ENCODE measurements at regions of chr11 and their contacts with region 1.

Region 1: GRCh38 chr11:117843666-117844484 is 19.3 kb upstream of the FXYD2 start:
- DNase-seq: peak; percentile 90
- H3K4me3 Mint-ChIP-seq: no peak overlapping the region
- H3K27ac Mint-ChIP-seq: no peak overlapping the region
- H3K4me1 Mint-ChIP-seq: no peaks in the 10 kb centered on the region
- H3K27me3 Mint-ChIP-seq: no peaks in the 10 kb centered on the region

Region 2: GRCh38 chr11:117877120-117877784 is 33.4 kb after region 1 on chr11:
- CTCF ChIA-PET with region 1: no interaction called
- POLR2A ChIA-PET with region 1: no interaction called
- intact Hi-C with region 1: no loop called
- DNase-seq: no peak
- H3K4me3 Mint-ChIP-seq: peak overlapping the region; percentile 42
- H3K27ac Mint-ChIP-seq: no peak overlapping the region
- H3K4me1 Mint-ChIP-seq: peaks cover 21% of the 10 kb centered on the region
- H3K27me3 Mint-ChIP-seq: peaks cover 46% of the 10 kb centered on the region

Region 3: GRCh38 chr11:117907251-117907981 is 63.5 kb after region 1 on chr11:
- CTCF ChIA-PET with region 1: interaction called, 10 read pairs
- POLR2A ChIA-PET with region 1: no interaction called
- intact Hi-C with region 1: loop called (anchors 1 kb)
- DNase-seq: peak; percentile 87
- H3K4me3 Mint-ChIP-seq: peak overlapping the region; percentile 45
- H3K27ac Mint-ChIP-seq: peak overlapping the region; percentile 8
- H3K4me1 Mint-ChIP-seq: peaks cover 13% of the 10 kb centered on the region
- H3K27me3 Mint-ChIP-seq: no peaks in the 10 kb centered on the region

Measured in activated CD4-positive, alpha-beta memory T cell treated with anti-CD3 and anti-CD28 coated beads for 36 hours (primary cell).